HEK293T (cell line): ENCODE measurements at regions of chr11 and their contacts with region 1.

Region 1: GRCh38 chr11:17528181-17528691 is 16.0 kb downstream of the USH1C start:
- DNase-seq: peak; percentile 84

Region 2: DNA sequence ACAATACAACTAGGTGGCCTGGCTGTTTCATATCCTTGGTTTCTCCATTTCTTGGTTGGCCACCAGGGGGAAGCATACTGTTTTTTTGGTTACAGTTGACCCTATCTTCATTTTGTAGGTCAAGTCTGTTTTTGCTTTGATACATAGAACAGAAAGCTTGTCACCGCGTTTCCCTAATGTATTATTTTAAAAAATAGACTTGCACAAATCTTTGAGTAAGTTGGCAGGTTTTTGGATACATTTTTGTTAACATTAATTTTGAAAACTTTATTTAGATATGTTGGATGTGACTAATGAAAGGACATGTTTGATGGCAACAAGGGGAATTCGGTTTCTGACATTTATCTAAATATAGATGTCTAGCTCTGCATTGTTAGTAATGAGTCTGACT is 173.6 kb before region 1 on chr11:
- CTCF ChIA-PET with region 1: interaction called, 10 read pairs
- POLR2A ChIA-PET with region 1: no interaction called
- DNase-seq: peak; percentile 62

Region 3: GRCh38 chr11:17384002-17384511 is 144.2 kb before region 1 on chr11:
- CTCF ChIA-PET with region 1: interaction called, 34 read pairs
- POLR2A ChIA-PET with region 1: no interaction called
- DNase-seq: peak; percentile 72

Region 4: DNA sequence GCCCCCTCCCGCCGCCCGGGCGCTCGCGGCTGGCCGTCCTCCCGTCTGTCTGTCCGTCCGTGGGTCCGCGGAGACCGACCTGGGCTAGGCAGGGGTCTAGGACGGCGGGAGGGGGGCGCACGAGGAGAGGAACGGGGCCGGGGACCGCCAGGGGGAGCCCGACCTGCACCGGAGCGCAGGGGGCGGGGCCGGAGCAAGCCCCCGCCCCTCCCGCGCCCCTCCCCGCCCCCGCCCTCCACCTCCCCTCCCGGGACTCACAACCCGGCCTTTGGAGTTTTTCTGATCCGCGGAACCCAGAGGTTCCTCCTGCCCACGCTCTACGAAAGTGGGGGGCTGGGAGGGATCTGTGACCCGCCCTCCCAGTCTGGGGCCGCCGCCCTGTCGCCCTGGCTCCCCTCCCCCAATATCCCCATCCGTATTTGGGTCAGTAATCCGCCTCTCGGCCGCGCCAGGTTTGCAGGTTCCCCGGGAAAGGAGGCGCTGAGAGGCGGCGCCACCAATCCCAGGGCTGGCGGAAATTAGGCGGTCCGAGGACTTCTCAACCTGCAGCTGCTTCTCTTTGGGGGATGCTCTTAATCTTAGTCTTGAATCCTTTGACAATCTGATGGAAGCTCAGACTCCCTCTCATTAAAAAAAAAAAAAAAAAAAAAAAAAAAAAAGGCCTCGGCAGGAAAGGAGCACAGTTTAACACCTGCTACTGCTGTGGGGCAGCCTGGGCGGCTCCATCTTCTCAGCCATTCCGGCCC is 138.9 kb before region 1 on chr11:
- CTCF ChIA-PET with region 1: interaction called, 34 read pairs
- POLR2A ChIA-PET with region 1: no interaction called
- DNase-seq: peak; percentile 90

Region 5: DNA sequence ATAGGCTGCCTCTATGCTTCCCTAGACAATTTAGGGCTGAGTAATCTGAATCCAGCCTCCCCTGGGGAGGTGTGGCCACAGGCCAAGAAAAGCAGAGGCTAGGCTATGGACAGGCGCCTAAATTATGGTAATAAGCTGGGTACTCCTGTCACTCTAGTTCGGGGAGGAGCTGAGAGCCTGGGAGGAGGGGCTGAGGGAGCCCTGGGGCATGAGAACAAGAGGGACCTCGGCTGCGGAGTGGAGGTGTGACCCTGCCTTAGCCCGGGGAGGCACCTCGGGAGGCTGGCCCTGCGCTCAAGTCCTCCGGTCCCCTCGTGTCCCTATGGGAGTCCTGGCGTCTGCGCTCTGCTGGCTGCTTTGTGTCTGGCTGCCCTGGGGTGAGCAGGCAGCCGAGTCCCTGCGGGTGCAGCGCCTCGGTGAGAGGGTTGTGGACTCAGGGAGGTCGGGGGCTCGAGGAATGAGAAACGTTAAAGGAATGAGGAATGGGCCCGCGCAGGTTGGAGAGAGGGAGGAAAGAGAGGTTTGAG is 18.9 kb after region 1 on chr11 and contains the start of gene OTOG:
- CTCF ChIA-PET with region 1: interaction called, 20 read pairs
- POLR2A ChIA-PET with region 1: no interaction called
- DNase-seq: peak; percentile 72

Region 6: GRCh38 chr11:17650127-17650911 is 122.1 kb after region 1 on chr11:
- CTCF ChIA-PET with region 1: no interaction called
- POLR2A ChIA-PET with region 1: no interaction called
- DNase-seq: peak; percentile 12